AG04450 (cell line): ENCODE measurements at regions of chr6 and their contacts with region 1.

Region 1: GRCh38 chr6:136609873-136610706 is 59.9 kb upstream of the MAP7 start:
- DNase-seq: peak; percentile 98
- H3K4me3 ChIP-seq: no peak overlapping the region
- H3K27ac ChIP-seq: peak overlapping the region; percentile 81
- H3K27me3 ChIP-seq: no peaks in the 10 kb centered on the region
- CTCF ChIP-seq: no peak

Region 2: GRCh38 chr6:135951169-135951568 is 658.9 kb before region 1 on chr6:
- CTCF ChIA-PET with region 1: no interaction called
- POLR2A ChIA-PET with region 1: no interaction called
- DNase-seq: no peak
- H3K4me3 ChIP-seq: no peak overlapping the region
- H3K27ac ChIP-seq: no peak overlapping the region
- H3K27me3 ChIP-seq: no peaks in the 10 kb centered on the region
- CTCF ChIP-seq: no peak

Region 3: GRCh38 chr6:136582711-136583471 is 27.2 kb before region 1 on chr6:
- CTCF ChIA-PET with region 1: interaction called, 5 read pairs
- POLR2A ChIA-PET with region 1: interaction called, 11 read pairs
- DNase-seq: peak; percentile 66
- H3K4me3 ChIP-seq: no peak overlapping the region
- H3K27ac ChIP-seq: peak overlapping the region; percentile 83
- H3K27me3 ChIP-seq: no peaks in the 10 kb centered on the region
- CTCF ChIP-seq: peak; percentile 64

Region 4: DNA sequence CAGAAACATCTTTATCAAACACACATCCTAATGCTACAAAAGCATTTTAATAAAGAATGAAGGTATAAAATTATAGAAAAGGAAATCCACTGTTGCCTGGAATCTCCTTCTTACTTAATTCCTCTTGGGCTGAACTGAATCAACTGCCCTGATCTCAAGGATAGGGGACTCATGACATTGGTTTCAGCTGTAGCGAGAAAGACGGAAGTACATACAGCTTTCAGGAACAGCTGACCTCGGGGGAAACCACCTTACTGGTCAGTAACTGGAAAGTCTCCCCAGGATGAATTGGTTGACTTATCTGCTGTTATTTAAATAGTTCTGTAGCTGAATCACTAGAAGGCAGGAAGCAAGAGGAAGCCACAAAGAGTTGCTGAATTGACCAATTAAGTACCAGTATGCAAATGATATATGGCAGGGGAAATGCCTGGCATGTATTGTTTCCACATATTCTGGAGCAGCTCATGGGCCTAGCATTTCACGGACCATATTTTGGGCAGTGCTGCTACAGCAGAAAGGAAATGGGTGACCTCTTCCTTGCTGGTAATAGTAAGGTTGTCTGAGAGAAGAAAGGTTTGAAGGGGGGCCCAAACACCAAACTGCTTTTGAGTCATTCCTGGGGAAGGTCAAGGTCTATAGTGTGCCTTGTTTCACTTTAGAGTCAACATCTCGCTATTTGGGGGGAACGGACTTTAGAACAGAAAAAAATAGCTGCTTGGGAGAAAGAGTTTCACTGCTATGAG is 16.2 kb before region 1 on chr6:
- CTCF ChIA-PET with region 1: interaction called, 4 read pairs
- POLR2A ChIA-PET with region 1: interaction called, 14 read pairs
- DNase-seq: peak; percentile 96
- H3K4me3 ChIP-seq: no peak overlapping the region; the same call in 1 of the 2 replicates
- H3K27ac ChIP-seq: peak overlapping the region; percentile 95
- H3K27me3 ChIP-seq: no peaks in the 10 kb centered on the region
- CTCF ChIP-seq: no peak

Region 5: DNA sequence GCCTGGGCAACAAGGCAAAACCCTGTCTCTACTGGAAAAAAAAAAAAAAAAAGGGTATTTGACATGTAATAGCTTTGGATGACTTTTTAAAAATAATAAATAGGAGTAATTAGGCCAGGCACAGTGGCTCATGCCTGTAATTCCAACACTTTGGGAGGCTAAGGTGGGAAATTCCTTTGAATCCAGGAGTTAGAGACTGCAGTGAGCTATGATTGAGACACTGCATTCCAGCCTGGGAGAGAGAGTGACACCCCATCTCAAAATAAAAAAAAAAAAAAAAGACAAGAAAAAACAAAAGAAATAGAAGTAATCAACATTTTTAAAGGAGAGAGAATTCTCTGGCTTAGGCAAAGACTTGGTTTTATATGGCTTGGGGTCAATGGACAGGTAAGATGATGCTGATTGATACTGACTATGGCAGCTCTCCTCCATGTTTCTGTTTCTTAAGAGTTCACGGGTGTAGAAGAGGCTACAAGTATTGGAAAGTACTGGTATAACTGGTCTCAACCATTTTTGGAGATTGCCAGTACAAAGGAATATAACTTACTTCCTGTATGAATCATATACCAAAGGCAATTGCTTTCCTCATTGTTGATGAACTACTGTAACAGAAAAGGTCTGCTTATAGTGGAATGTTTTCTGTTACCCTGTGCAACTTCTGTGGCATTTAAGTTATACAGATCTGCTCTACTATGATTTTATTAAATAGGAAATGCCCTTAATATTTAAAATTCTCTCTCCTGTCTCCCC is 172.1 kb after region 1 on chr6:
- CTCF ChIA-PET with region 1: interaction called, 3 read pairs
- POLR2A ChIA-PET with region 1: interaction called, 10 read pairs
- DNase-seq: peak; percentile 21
- H3K4me3 ChIP-seq: no peak overlapping the region
- H3K27ac ChIP-seq: peak overlapping the region; percentile 58
- H3K27me3 ChIP-seq: no peaks in the 10 kb centered on the region
- CTCF ChIP-seq: no peak

Region 6: GRCh38 chr6:137025786-137026456 is 415.8 kb after region 1 on chr6:
- CTCF ChIA-PET with region 1: no interaction called
- POLR2A ChIA-PET with region 1: no interaction called
- DNase-seq: no peak
- H3K4me3 ChIP-seq: no peak overlapping the region
- H3K27ac ChIP-seq: no peak overlapping the region
- H3K27me3 ChIP-seq: peaks cover 2% of the 10 kb centered on the region
- CTCF ChIP-seq: no peak